ENCODE measurements at regions of chr10 and their contacts with region 1.

Region 1: DNA sequence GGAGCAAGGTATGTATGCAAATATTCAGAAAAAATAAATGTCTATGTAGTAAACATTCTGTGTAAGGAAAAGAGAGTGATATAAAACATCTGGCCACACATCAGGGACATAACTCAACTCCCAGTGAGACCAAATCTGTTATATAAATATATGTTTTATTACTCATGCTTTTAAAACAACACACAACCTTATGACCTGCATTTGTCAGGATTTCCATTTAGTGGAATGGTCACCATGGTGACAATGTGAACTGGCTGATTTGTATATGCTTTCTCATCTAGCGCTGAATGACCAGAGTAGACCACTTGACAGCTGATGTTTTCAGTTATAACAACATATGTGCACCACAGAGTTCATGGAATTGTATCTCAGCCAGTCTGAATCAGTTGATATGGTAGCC is 551.7 kb downstream of the HTR7 start:
- DNase-seq: no peak
- H3K4me3 ChIP-seq: no peak overlapping the region
- H3K27ac ChIP-seq: no peak overlapping the region
- H3K4me1 ChIP-seq: no peaks in the 10 kb centered on the region
- H3K27me3 ChIP-seq: no peaks in the 10 kb centered on the region
- CTCF ChIP-seq: no peak

Region 2: GRCh38 chr10:90484518-90484917 is 178.3 kb after region 1 on chr10:
- CTCF ChIA-PET with region 1: no interaction called
- POLR2A ChIA-PET with region 1: no interaction called
- intact Hi-C with region 1: loop called (anchors 10 kb)
- DNase-seq: peak in 1 of 2 experiments; percentile 66
- H3K4me3 ChIP-seq: no peak overlapping the region
- H3K27ac ChIP-seq: no peak overlapping the region
- H3K4me1 ChIP-seq: no peaks in the 10 kb centered on the region
- H3K27me3 ChIP-seq: no peaks in the 10 kb centered on the region
- CTCF ChIP-seq: no peak

Region 3: DNA sequence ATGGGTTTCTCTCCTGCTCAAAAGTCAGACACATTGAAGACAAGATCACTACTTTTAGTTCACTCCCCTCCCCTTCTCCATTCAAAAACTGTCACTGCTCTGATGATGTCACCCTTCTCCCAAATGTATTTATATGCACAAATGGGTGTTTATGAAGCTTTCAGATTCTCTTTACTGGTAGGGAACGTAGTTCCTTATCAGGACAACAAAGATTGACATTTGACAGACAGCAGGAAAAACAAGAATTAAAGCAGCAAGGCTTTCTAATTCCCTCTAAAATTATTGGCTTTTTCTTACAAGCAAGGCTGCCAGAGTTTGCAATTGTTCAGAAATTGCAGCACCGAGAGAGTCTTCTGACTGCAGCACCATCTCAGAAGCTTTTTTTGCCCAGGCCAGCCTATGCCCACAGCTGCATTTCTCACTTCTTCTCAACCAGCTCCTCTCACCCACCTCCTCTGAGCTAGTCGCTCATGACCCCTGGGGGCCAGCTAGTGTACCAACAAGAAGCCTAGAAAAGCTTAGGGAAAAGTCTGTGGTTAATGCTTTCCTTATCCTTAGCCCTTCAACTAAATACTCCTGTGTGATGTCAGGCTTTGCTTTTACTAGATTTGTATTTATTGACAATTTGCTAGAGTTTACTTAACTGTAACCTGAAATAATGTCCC is 286.6 kb after region 1 on chr10:
- CTCF ChIA-PET with region 1: interaction called, 3 read pairs
- POLR2A ChIA-PET with region 1: interaction called, 4 read pairs
- intact Hi-C with region 1: loop called (anchors 5 kb)
- DNase-seq: peak in 1 of 2 experiments; percentile 63
- H3K4me3 ChIP-seq: no peak overlapping the region
- H3K27ac ChIP-seq: no peak overlapping the region
- H3K4me1 ChIP-seq: no peaks in the 10 kb centered on the region
- H3K27me3 ChIP-seq: no peaks in the 10 kb centered on the region
- CTCF ChIP-seq: peak; percentile 62

Measured in PC-9 (cell line).